ENCODE measurements at regions of chr10 and their contacts with region 1.

Region 1: DNA sequence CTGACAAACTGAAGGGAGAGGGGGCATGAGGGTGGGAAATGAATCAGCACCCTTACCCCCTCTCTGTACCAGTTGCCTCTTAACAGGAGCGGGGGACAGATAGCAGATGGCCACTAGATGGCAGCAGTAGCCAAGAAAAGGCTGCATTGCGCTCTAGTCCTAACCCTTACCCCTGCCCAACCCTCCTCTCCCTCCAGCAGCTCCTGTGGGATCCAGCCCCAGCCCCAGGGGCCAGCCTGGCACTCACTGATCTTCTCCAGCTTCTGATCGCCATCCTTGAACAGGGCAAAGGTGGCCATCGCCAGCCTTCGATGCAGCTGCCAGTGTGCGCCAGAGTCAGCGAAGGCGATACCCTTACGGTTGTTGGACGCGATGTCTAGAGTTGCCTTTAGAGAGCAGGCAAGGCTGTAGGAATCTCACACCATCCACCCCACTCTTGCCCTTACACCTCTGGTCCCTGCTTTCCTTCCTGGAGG is 2.2 kb downstream of the CYP17A1 start:
- DNase-seq: peak; percentile 75
- H3K4me3 ChIP-seq: no peak overlapping the region
- H3K27ac ChIP-seq: no peak overlapping the region
- H3K4me1 ChIP-seq: no peaks in the 10 kb centered on the region
- H3K27me3 ChIP-seq: no peaks in the 10 kb centered on the region
- CTCF ChIP-seq: peak; percentile 60 to 84 (median 82)
- POLR2A ChIP-seq: no peak

Region 2: GRCh38 chr10:102904346-102904745 is 69.3 kb after region 1 on chr10:
- intact Hi-C with region 1: loop called (anchors 5 kb)
- DNase-seq: no peak
- H3K4me3 ChIP-seq: no peak overlapping the region
- H3K27ac ChIP-seq: no peak overlapping the region
- H3K4me1 ChIP-seq: no peaks in the 10 kb centered on the region
- H3K27me3 ChIP-seq: no peaks in the 10 kb centered on the region
- CTCF ChIP-seq: no peak
- POLR2A ChIP-seq: no peak

Region 3: DNA sequence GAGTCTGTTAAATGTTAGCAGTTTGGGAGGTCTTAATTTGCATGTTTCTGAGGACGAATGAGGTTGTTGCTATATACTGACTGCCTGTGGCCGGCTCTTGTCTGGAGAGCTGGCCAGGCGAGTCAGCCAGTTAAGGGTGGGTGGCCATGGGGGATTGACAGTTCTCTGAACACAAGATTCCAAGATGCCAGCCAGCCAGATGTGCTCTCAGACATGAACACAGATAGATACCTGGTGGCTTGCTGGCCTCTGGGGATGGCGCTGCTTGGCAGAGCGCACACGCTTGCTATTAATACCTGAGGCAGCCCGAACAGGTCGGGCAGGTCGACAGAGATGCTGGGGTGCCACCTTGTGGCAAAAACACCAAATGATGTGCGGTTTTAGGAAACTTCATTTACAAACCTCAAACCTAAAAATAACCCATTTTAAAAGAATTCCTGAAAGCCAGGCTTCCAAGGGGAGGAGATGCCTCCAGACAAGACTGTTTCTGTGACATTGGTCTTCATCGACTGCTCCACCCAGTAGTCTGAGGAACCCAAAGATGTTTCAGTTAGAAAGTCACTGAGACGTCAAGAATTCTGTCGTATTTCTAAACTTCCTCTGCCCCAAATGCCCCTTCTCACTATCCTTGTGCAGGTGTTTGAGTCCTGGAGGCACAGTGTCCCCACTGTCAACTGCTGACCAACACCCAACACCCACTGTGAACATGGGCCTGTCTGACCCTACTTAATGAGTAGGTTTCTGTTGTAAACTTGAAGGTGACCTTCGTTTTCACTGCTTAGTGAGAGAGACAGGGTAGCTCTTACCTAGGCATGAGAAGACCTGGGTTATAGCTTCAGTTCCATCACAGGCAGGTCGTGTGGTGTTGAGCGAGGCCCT is 234.6 kb after region 1 on chr10:
- intact Hi-C with region 1: loop called (anchors 5 kb)
- DNase-seq: peak; percentile 73
- H3K4me3 ChIP-seq: no peak overlapping the region
- H3K27ac ChIP-seq: no peak overlapping the region
- H3K4me1 ChIP-seq: no peaks in the 10 kb centered on the region
- H3K27me3 ChIP-seq: no peaks in the 10 kb centered on the region
- CTCF ChIP-seq: peak; percentile 38 to 90 (median 87)
- POLR2A ChIP-seq: no peak

Measured in prostate gland (tissue), 2 donors.